ENCODE measurements at regions of chr11 and their contacts with region 1.

Region 1: DNA sequence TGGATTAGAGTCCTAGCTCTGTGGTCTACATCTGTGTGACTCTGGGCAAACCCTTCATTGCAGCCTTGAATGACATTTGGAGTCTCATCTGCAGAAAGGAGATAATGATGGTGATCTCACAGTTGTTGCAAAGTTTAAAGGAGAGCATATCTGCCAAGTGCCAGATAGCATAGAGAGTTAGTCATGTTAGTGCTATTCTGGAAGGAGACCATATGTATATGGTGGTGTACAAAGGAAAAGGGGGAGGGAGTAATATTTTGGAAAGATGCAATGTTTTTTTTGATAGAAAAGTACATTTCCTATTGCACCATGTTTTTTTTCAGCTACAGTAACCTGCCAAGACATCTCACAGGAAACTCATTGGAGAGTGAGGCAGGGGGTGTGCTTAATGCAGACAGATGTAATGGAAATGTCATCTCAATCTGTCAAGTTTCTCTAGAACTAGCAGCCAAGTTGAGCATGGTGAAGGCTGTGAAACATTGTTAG is 92.1 kb upstream of the NARS2 start:
- DNase-seq: no peak
- H3K4me3 ChIP-seq: no peak overlapping the region
- H3K27ac ChIP-seq: no peak overlapping the region
- H3K4me1 ChIP-seq: no peaks in the 10 kb centered on the region; a peak in 1 of 7 replicates
- H3K27me3 ChIP-seq: no peaks in the 10 kb centered on the region
- CTCF ChIP-seq: no peak
- EP300 ChIP-seq: no peak
- POLR2A ChIP-seq: no peak
- RAD21 ChIP-seq: no peak

Region 2: DNA sequence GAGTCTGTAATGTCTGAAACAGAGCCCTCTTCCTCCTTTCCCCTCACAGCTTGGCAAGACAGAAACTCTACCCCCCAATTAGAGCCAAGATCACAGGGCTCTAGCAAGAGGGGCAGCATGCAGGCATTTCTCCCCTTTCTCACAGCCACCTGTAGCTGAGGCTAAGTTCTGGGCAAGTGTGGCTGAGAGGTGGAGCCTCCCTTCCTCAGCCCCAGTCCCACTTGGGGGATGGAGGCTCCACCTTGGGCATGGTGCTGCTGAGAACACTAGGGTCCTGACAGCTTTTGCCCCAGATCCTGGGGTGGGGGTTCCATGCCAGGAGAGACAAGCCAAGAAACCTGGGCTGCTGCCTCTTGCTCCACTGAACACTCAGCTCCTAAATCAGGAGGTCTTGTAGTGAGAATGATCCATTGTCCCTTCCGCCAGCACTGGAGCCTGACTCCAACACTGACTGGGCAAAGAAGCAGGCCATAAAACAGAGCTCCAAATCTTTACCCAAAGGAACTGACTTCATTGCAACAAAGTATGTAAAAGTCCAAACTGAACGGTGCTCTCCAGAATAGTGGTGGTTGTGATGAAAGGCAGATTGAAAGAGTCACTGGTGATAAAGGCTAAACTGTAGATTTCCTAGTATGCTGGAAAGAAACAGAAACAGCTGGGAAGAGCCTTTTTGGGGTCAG is 117.7 kb before region 1 on chr11:
- CTCF ChIA-PET with region 1: no interaction called
- POLR2A ChIA-PET with region 1: no interaction called
- DNase-seq: no peak
- H3K4me3 ChIP-seq: peak overlapping the region in 1 of 4 experiments; percentile 33; a peak in 1 of 8 replicates
- H3K27ac ChIP-seq: no peak overlapping the region
- H3K4me1 ChIP-seq: peaks cover 6 to 15% (median 12%) of the 10 kb centered on the region in 4 experiments
- H3K27me3 ChIP-seq: no peaks in the 10 kb centered on the region
- CTCF ChIP-seq: no peak
- EP300 ChIP-seq: no peak
- POLR2A ChIP-seq: no peak
- RAD21 ChIP-seq: no peak

Region 3: GRCh38 chr11:78651923-78652842 is 14.5 kb before region 1 on chr11:
- CTCF ChIA-PET with region 1: interaction called, 143 read pairs
- POLR2A ChIA-PET with region 1: no interaction called
- DNase-seq: peak in 1 of 2 experiments; percentile 28
- H3K4me3 ChIP-seq: no peak overlapping the region
- H3K27ac ChIP-seq: no peak overlapping the region
- H3K4me1 ChIP-seq: peaks cover 0 to 2% (median 0%) of the 10 kb centered on the region in 4 experiments; a peak in 1 of 7 replicates
- H3K27me3 ChIP-seq: no peaks in the 10 kb centered on the region; a peak in 1 of 7 replicates
- CTCF ChIP-seq: no peak
- EP300 ChIP-seq: no peak
- POLR2A ChIP-seq: no peak
- RAD21 ChIP-seq: no peak